ENCODE measurements at regions of chr13 and their contacts with region 1.

Region 1: DNA sequence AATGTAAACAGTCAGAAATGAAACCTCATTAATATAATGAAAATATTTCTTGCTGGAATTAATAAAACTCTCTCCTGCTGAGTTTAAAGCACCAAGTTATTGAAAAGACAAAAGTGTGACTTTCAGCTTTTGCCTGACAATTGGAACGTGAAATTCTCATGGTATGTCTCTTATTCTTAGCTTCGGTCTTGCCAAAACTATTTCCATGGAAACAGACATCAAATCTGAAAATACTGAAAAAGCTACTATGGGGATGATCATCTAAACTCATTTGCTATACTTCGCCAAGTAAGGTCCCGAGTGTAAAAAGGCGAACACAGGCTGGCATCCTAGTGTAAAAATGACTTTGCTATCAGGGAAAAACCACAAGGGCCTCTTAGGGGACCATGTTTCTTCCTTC is 22.8 kb downstream of the HTR2A start:
- DNase-seq: no peak
- H3K4me3 ChIP-seq: no peak overlapping the region
- H3K4me3 Mint-ChIP-seq: no peak overlapping the region
- H3K27ac ChIP-seq: no peak overlapping the region
- H3K27ac Mint-ChIP-seq: no peak overlapping the region
- H3K4me1 ChIP-seq: no peaks in the 10 kb centered on the region
- H3K4me1 Mint-ChIP-seq: no peaks in the 10 kb centered on the region
- H3K27me3 ChIP-seq: no peaks in the 10 kb centered on the region
- H3K27me3 Mint-ChIP-seq: peaks cover 18 to 21% of the 10 kb centered on the region in 2 donors

Region 2: GRCh38 chr13:46831588-46832194 is 42.3 kb before region 1 on chr13:
- CTCF ChIA-PET with region 1: no interaction called
- POLR2A ChIA-PET with region 1: no interaction called
- intact Hi-C with region 1: no loop called
- DNase-seq: peak in 3 of 5 donors; percentile 10 to 14 (median 11)
- H3K4me3 ChIP-seq: no peak overlapping the region
- H3K4me3 Mint-ChIP-seq: no peak overlapping the region
- H3K27ac ChIP-seq: no peak overlapping the region
- H3K27ac Mint-ChIP-seq: no peak overlapping the region
- H3K4me1 ChIP-seq: no peaks in the 10 kb centered on the region
- H3K4me1 Mint-ChIP-seq: no peaks in the 10 kb centered on the region
- H3K27me3 ChIP-seq: no peaks in the 10 kb centered on the region
- H3K27me3 Mint-ChIP-seq: peaks cover 1 to 6% of the 10 kb centered on the region in 2 donors

Region 3: DNA sequence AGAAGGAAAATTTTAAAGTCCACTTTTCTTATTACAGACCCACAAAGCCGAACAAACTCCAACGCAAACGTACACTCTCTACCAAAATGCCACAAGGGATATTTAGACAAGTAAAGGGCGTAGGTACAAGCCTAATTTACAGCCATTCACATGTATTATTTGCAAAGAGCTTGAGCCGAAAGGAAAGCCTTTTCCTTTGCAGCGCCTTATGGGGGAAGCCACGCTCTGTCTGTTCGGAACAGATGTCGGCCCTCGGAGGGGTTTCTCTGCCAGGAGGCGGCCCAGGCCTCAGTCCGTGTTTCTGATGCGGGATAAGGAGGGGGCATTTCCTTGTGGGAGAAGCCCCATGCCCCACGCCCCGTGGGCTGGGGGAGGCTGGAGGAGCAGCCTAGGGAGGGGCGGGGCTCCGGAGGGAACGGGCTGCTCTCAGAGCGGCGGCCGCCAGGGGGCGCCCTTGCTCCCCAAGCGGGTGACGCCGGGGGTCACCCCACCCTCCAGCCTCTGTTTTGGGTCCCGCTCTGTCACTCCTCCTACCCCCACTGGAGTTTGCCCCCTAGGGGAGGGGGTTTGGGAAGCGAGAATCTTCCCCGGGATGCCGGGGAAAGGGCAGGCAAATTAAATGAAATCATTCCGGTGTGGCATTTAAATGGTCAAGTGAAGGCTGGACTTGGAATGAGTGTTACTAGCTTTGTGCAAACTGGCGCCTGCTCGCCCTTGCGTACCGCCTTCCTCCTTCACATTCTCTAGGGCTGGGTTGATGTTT is 20.0 kb after region 1 on chr13:
- CTCF ChIA-PET with region 1: interaction called, 11 read pairs
- POLR2A ChIA-PET with region 1: no interaction called
- intact Hi-C with region 1: no loop called
- DNase-seq: peak; percentile 43 to 55 (median 52)
- H3K4me3 ChIP-seq: peak overlapping the region in 1 of 2 donors; percentile 34
- H3K4me3 Mint-ChIP-seq: peak overlapping the region; percentile 68 to 77 (median 74)
- H3K27ac ChIP-seq: no peak overlapping the region
- H3K27ac Mint-ChIP-seq: no peak overlapping the region
- H3K4me1 ChIP-seq: peaks cover 13% of the 10 kb centered on the region
- H3K4me1 Mint-ChIP-seq: peaks cover 16 to 28% (median 21%) of the 10 kb centered on the region in 4 donors
- H3K27me3 ChIP-seq: peaks cover 10% of the 10 kb centered on the region
- H3K27me3 Mint-ChIP-seq: peaks cover 28 to 63% of the 10 kb centered on the region in 2 donors

Measured in CD4-positive, alpha-beta memory T cell (primary cell).